Activated B cell treated with CpG ODN at 0.5 μM for 24 hours (primary cell): ENCODE measurements at regions of chr22 and their contacts with region 1.

Region 1: DNA sequence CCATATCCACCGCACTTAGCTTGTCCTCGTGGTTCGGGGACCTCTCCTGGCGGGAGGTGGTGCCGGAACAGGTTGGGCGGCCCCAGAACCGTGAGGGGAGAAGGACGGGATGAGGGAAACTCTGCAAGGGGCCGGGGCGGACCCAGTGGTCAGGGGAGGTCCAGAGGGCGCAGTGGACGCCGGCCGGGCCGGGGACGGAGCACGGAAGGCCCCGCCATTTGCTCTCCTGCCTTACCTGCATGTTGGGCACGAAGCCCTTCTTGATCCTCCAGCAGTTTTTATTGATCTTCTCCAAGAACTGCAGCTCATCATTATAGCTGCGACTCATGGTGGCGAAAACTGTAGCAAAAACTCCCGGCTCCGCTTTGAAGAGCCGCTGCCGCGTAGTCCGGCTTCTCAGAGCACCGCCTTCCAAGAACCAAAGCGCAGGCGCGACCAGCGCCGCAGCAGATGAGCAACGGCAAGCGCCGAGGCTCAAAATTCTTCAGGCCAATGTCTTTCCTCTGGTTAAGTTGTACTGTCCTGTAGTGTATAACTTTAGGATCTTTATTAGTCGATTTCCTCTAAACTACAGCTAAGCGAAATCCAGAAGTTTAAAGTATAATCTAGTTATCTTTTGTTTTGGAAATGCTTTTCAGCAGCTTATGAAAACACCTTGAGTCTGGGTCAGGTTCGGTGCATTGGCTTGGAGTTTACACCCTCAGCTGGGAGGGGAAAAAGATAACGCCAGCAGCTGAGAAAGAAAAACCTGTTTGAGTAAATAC is at the start of gene RTCB:
- DNase-seq: peak; percentile 93
- ATAC-seq: peak; percentile 65
- H3K4me3 Mint-ChIP-seq: peak within 1 kb of the TSS; percentile 97
- H3K27ac Mint-ChIP-seq: peak within 1 kb of the TSS; percentile 97
- H3K4me1 Mint-ChIP-seq: peaks cover 56% of the 10 kb centered on the region
- H3K27me3 Mint-ChIP-seq: peaks cover 7% of the 10 kb centered on the region
- CTCF ChIP-seq: no peak
- total RNA-seq, gene RTCB: 112 and 119 TPM in 2 replicates

Region 2: DNA sequence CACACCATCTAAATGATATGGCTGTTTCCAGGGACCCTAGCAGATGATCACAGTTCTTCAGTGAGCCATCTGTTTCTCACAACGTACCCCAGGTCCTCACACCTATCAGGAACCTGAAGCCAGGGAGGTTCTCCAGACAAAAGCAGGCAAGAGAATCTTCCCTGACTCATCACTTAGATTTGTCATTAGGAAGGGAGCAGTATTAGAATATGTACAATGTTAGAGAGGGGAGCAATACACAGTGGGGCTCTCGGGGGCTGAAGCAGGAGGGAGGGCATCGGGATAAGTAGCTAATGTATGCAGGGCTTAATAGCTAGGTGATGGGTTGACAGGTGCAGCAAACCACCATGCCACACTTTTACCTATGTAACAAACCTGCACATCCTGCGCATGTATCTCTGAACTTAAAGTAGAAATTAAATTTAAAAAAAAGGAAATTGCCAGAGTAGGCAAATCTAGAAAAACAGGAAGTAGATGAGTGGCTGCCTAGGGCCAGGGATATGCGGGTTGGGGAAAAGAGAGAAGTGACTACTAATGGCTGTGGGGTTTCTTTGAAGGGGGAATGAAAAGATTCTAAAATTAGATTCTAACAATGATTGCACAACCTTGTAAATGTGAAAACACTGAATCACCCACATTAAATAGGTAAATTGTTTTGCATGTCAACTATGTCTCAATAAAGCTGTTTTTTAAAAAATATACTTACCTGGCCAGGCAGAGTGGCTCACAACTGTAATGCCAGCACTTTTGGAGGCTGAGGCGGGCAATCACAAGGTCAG is 267.3 kb before region 1 on chr22:
- CTCF ChIA-PET with region 1: no interaction called
- POLR2A ChIA-PET with region 1: no interaction called
- intact Hi-C with region 1: loop called (anchors 5 kb)
- DNase-seq: no peak
- ATAC-seq: peak; percentile 83
- H3K4me3 Mint-ChIP-seq: no peak overlapping the region
- H3K27ac Mint-ChIP-seq: peak overlapping the region; percentile 20
- H3K4me1 Mint-ChIP-seq: peaks cover 19% of the 10 kb centered on the region
- H3K27me3 Mint-ChIP-seq: no peaks in the 10 kb centered on the region
- CTCF ChIP-seq: no peak